ENCODE measurements at regions of chrX and their contacts with region 1.

Region 1: DNA sequence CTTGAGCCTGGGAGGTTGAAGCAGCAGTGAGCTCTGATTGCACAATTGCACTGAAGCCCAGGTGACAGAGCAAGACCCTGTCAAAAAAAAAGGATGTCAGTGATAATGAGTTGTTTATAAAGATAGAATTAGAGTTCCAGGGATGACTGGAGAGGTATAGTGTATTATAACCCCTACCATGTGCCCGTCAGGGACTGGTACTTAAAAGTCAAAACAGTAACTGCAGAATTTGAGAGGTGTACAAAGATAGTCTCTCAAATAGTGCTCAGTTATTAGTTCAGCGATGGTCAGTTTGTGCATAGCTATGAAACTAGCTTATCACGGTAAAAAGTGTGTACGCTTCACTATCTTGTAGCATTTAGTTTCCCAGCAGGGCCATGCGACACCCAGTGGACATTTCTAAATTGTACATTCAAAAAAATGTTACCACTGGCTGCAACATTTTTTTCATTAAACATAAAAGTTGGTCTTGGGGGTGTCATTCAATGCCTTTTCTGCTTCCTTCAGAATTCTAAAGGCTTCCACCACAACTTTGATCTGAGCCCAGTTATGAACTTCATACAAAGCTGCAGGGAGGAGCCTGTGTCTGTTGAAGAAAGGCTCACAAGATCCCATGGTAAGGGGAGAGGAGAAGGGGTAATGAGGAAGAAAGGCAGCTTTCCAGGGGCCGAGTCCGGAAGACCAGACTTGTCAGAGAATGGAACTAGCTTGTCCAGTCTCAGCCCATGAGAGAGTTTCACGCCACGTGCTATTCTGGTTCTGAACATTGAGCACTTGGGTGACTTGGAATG is 9.2 kb upstream of the GYG2 start:
- DNase-seq: no peak
- H3K4me3 ChIP-seq: no peak overlapping the region
- H3K27ac ChIP-seq: no peak overlapping the region
- H3K4me1 ChIP-seq: no peaks in the 10 kb centered on the region
- H3K27me3 ChIP-seq: no peaks in the 10 kb centered on the region
- CTCF ChIP-seq: peak; percentile 19 to 41 (median 33)
- EP300 ChIP-seq: no peak
- POLR2A ChIP-seq: no peak

Region 2: GRCh38 chrX:2640275-2641150 is 179.0 kb before region 1 on chrX:
- in situ Hi-C with region 1: loop called in 2 of 4 experiments (anchors 10 kb)
- intact Hi-C with region 1: no loop called
- DNase-seq: no peak
- H3K4me3 ChIP-seq: no peak overlapping the region
- H3K27ac ChIP-seq: no peak overlapping the region
- H3K4me1 ChIP-seq: no peaks in the 10 kb centered on the region
- H3K27me3 ChIP-seq: no peaks in the 10 kb centered on the region
- CTCF ChIP-seq: no peak
- EP300 ChIP-seq: no peak
- POLR2A ChIP-seq: no peak

Region 3: DNA sequence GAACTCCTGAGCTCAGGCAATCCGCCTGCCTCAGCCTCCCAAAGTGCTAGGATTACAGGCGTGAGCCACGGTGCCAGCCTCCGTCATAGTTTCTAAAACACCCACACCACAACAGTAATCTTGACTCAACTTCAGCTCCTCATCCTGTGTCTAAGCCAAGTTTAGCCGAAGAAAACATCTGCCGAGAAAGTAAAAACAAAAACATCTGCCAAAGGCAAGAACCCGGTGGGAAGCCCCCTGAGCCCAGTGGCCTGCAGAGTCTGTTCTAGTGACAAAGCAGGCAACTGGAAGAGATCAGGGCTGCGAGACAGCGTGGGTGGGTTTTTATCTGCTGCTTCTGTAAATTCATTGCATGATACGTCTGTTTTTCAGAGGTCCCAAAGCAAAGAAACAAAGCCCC is 155.0 kb before region 1 on chrX:
- in situ Hi-C with region 1: loop called in 2 of 4 experiments (anchors 25 kb)
- intact Hi-C with region 1: no loop called
- DNase-seq: no peak
- H3K4me3 ChIP-seq: no peak overlapping the region
- H3K27ac ChIP-seq: peak overlapping the region in 2 of 4 donors; percentile 3 to 47
- H3K4me1 ChIP-seq: peaks cover 0 to 12% (median 0%) of the 10 kb centered on the region in 4 donors
- H3K27me3 ChIP-seq: no peaks in the 10 kb centered on the region
- CTCF ChIP-seq: no peak
- EP300 ChIP-seq: no peak
- POLR2A ChIP-seq: no peak

Measured in transverse colon (tissue), 4 donors.